Activated B cell treated with CpG ODN at 0.5 μM for 24 hours (primary cell): ENCODE measurements at regions of chr2 and their contacts with region 1.

Region 1: DNA sequence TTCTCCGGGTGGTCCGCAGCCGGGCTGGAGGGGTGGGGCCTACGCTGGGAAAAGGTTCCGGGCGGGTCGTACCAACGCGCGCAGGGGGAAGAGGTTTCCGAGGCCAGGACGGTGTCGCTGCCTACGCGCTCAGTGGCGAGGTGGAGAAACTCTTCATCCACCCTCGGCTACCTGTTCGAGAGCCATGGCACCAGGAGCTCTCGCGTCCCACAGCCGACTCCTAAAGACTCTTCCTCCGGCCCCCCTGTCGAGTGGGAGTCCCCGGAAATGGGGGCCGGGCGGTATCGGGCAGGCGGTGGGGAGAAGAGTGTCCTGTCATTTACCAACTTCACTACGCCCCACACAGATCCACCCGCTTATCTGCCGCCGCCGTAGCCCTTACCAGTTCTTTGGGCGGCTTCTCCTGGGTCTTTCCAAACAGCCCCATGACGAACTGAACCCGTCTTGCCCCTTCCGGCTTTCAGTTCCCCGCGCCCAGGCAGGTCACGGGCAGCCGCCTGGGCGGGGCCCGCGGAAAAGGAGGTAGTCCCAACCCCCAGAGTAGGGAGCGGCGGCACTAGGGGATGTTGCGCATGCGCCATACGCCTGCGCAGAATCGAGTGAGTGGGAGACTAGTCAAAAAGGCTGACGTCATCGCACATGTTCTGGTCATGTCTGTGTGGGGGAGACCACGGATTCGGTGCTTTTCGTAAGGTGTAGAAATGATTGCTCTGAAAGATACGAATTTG is at the start of gene CHMP3:
- DNase-seq: peak; percentile 94
- ATAC-seq: peak; percentile 89
- H3K4me3 Mint-ChIP-seq: peak within 1 kb of the TSS; percentile 97
- H3K27ac Mint-ChIP-seq: peak within 1 kb of the TSS; percentile 98
- H3K4me1 Mint-ChIP-seq: peaks cover 38% of the 10 kb centered on the region
- H3K27me3 Mint-ChIP-seq: peaks cover under 1% of the 10 kb centered on the region
- CTCF ChIP-seq: no peak
- total RNA-seq, gene CHMP3: 61.4 and 66.9 TPM in 2 replicates

Region 2: GRCh38 chr2:85611705-85612587 is 951.1 kb before region 1 on chr2 and contains the start of gene C2orf68:
- CTCF ChIA-PET with region 1: no interaction called
- POLR2A ChIA-PET with region 1: no interaction called
- intact Hi-C with region 1: loop called (anchors 1 kb)
- DNase-seq: peak; percentile 81
- ATAC-seq: peak; percentile 73
- H3K4me3 Mint-ChIP-seq: peak within 1 kb of the TSS; percentile 98
- H3K27ac Mint-ChIP-seq: peak within 1 kb of the TSS; percentile 91
- H3K4me1 Mint-ChIP-seq: peaks cover 39% of the 10 kb centered on the region
- H3K27me3 Mint-ChIP-seq: no peaks in the 10 kb centered on the region
- CTCF ChIP-seq: no peak
- total RNA-seq, gene C2orf68: 49.7 and 61.5 TPM in 2 replicates

Region 3: DNA sequence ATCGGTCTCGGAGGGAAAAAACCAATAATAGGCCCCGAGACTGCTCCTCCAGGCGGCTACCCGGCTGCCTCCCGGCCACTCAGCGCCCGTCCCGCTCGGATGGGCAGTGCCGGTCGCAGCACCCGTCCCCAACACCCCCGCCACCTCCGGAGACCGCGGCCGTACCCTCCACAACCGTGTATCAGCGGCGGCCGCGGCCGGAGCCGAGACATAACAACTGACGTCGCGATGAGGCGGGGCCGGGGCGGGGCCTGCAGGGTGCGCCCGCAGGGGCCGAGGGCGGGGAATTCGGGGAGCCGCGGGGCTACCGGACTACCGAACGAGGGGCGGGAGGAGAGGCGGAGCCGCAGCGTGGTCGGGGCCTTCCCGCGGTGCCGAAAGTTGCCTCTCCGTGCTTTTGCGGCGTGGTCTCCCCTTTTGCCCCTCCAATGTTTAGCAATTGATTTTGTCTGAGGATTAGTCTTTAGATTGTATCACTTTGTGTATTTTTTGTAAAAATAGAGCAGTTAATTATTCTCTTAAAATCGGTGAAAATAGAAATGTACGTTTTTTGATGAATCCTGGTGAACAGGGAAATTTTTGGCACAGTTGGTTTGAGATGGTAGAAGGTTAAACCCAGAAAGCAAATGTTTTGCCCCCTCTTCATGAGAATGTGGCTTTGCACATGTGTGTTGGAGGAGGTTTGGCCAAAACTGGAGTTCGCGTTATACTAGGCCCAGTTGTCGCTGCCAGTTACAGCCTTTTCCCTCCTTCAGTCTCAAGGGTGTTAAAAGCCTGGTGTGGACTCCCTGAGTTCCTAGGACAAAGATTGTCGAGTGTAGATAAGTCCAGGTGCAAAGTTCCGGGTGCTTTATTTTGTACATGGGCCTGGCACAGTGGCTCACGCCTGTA is 60.8 kb after region 1 on chr2 and contains the start of gene RNF103:
- CTCF ChIA-PET with region 1: no interaction called
- POLR2A ChIA-PET with region 1: interaction called, 13 read pairs
- intact Hi-C with region 1: loop called (anchors 1 kb)
- DNase-seq: peak; percentile 98
- ATAC-seq: peak; percentile 86
- H3K4me3 Mint-ChIP-seq: peak within 1 kb of the TSS; percentile 94
- H3K27ac Mint-ChIP-seq: peak within 1 kb of the TSS; percentile 96
- H3K4me1 Mint-ChIP-seq: peaks cover 35% of the 10 kb centered on the region
- H3K27me3 Mint-ChIP-seq: no peaks in the 10 kb centered on the region
- CTCF ChIP-seq: no peak
- total RNA-seq, gene RNF103: 18.6 and 22.2 TPM in 2 replicates